Ascending aorta (tissue), 2 donors: ENCODE measurements at regions of chr19 and their contacts with region 1.

Region 1: GRCh38 chr19:40444192-40445028 is at the start of gene SERTAD3:
- DNase-seq: peak; percentile 92 to 99
- H3K4me3 ChIP-seq: peak within 1 kb of the TSS; percentile 93 to 96
- H3K27ac ChIP-seq: peak within 1 kb of the TSS; percentile 96 to 97
- H3K4me1 ChIP-seq: peaks cover 3 to 13% of the 10 kb centered on the region in 2 donors
- H3K27me3 ChIP-seq: no peaks in the 10 kb centered on the region
- CTCF ChIP-seq: peak in 1 of 3 experiments; percentile 44
- total RNA-seq, gene SERTAD3: 36.9 TPM

Region 2: DNA sequence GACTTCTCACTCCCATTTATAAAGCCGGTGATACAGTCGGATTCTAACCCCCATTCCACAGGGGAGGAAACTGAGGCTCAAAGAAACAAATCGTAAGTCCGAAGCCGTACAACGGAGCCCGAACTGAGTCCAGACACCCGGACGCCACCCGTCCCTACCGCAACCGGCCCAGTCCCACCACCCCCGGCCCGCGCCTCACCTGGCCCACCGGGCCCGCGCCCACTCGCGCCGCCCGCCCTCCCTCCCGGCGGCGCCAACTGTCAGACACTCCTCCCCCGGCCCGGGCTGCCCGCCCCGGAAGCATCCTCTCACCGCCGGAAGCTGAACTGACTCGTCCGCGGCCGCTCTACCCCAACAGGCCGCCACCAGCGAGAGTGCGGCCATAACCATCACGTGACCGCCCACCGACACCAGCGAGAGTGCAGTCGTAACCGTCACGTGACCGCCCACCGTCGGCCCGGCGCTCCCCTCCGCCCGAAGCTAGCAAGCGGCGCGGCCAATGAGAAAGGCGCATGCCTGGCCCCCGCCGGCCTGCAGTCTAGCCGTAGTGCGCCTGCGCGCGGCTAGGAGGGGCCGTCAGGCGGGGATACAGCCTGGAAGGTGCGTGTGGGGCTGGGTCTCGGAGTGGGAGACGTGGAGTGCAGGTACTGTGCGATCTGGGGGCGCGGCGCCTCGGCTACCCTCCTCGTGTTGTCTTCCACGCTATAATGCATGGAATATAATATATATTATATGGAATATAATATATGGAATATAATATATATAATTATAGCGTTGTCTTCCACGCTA is 96.1 kb before region 1 on chr19 and contains the starts of genes C19orf47 and PLD3:
- intact Hi-C with region 1: loop called (anchors 1 kb)
- DNase-seq: peak; percentile 99 to 100
- H3K4me3 ChIP-seq: peak within 1 kb of the TSS; percentile 80 to 94
- H3K27ac ChIP-seq: peak within 1 kb of the TSS; percentile 51 to 85
- H3K4me1 ChIP-seq: peaks cover 4 to 10% of the 10 kb centered on the region in 2 donors
- H3K27me3 ChIP-seq: no peaks in the 10 kb centered on the region
- CTCF ChIP-seq: no peak
- total RNA-seq, gene C19orf47: 10.4 TPM
- total RNA-seq, gene PLD3: 345 TPM

Region 3: DNA sequence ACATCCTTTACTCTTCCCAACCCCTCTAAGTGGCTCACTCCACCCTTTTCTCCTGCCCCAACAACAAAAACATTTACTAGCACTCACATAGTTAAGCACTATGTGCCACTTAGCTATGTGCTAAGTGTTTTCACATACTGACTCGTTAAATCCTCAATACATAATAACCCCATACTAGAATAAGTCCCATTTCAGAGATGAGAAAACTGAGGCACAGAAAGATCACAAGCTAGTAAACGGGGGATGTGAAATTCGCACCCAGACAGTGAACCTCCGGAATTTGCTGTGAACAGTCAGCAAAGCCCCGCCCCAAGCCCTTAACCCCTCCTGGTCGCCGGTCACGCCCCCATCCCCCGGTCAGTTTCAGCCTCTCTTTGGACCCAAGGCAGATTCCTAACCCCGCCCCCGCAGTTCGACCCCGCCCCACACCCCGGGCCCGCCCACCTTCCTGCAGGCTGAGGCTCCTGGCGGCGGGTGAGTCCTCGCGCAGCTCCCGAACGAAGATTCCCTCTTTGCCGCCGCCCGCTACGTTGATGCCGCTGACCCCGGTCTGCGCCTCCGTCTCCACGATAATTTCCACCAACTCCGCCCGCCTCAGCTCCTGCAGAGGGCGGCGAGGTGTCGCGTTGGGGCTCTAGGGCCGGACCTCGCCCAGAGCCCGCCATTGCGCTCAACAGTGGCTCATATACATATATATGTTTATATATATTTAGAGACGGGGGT is 41.0 kb before region 1 on chr19:
- intact Hi-C with region 1: loop called (anchors 1 kb)
- DNase-seq: peak; percentile 63 to 95
- H3K4me3 ChIP-seq: peak overlapping the region; percentile 50 to 67
- H3K27ac ChIP-seq: peak overlapping the region; percentile 67 to 79
- H3K4me1 ChIP-seq: peaks cover 3 to 4% of the 10 kb centered on the region in 2 donors
- H3K27me3 ChIP-seq: no peaks in the 10 kb centered on the region
- CTCF ChIP-seq: peak in 1 of 3 experiments; percentile 13

Region 4: GRCh38 chr19:40425450-40426287 is 18.7 kb before region 1 on chr19 and contains the start of gene SERTAD1:
- intact Hi-C with region 1: loop called (anchors 1 kb)
- DNase-seq: peak; percentile 99 to 100
- H3K4me3 ChIP-seq: peak within 1 kb of the TSS; percentile 62 to 83
- H3K27ac ChIP-seq: peak within 1 kb of the TSS; percentile 98 to 99
- H3K4me1 ChIP-seq: peaks cover 14 to 30% of the 10 kb centered on the region in 2 donors
- H3K27me3 ChIP-seq: no peaks in the 10 kb centered on the region
- CTCF ChIP-seq: peak; percentile 75 to 86 (median 85)
- total RNA-seq, gene SERTAD1: 39.7 TPM

Region 5: GRCh38 chr19:40433391-40434216 is 10.8 kb before region 1 on chr19:
- intact Hi-C with region 1: loop called (anchors 1 kb)
- DNase-seq: peak; percentile 52 to 93
- H3K4me3 ChIP-seq: peak overlapping the region; percentile 53 to 59
- H3K27ac ChIP-seq: peak overlapping the region; percentile 86 to 93
- H3K4me1 ChIP-seq: peaks cover 0 to 20% of the 10 kb centered on the region in 2 donors
- H3K27me3 ChIP-seq: no peaks in the 10 kb centered on the region
- CTCF ChIP-seq: no peak

Region 6: GRCh38 chr19:40603389-40604135 is 159.2 kb after region 1 on chr19:
- intact Hi-C with region 1: loop called (anchors 5 kb)
- DNase-seq: peak; percentile 96 to 99
- H3K4me3 ChIP-seq: peak overlapping the region; percentile 75 to 92
- H3K27ac ChIP-seq: peak overlapping the region; percentile 88 to 95
- H3K4me1 ChIP-seq: peaks cover 11 to 44% of the 10 kb centered on the region in 2 donors
- H3K27me3 ChIP-seq: no peaks in the 10 kb centered on the region
- CTCF ChIP-seq: no peak

Region 7: GRCh38 chr19:40690693-40691420 is 246.4 kb after region 1 on chr19:
- intact Hi-C with region 1: loop called (anchors 1 kb)
- DNase-seq: peak; percentile 71 to 97
- H3K4me3 ChIP-seq: peak overlapping the region; percentile 84 to 86
- H3K27ac ChIP-seq: peak overlapping the region; percentile 89 to 93
- H3K4me1 ChIP-seq: peaks cover 6 to 24% of the 10 kb centered on the region in 2 donors
- H3K27me3 ChIP-seq: no peaks in the 10 kb centered on the region
- CTCF ChIP-seq: no peak